ENCODE measurements at regions of chr15 and their contacts with region 1.

Region 1: GRCh38 chr15:91224755-91225380 is 124.8 kb downstream of the SV2B start:
- DNase-seq: no peak
- ATAC-seq: peak in 3 of 4 donors; percentile 31 to 68 (median 52)
- H3K4me3 ChIP-seq: no peak overlapping the region
- H3K27ac ChIP-seq: no peak overlapping the region
- H3K4me1 ChIP-seq: no peaks in the 10 kb centered on the region
- H3K27me3 ChIP-seq: peaks cover 0 to 3% (median 0%) of the 10 kb centered on the region in 3 donors
- CTCF ChIP-seq: peak; percentile 67

Region 2: DNA sequence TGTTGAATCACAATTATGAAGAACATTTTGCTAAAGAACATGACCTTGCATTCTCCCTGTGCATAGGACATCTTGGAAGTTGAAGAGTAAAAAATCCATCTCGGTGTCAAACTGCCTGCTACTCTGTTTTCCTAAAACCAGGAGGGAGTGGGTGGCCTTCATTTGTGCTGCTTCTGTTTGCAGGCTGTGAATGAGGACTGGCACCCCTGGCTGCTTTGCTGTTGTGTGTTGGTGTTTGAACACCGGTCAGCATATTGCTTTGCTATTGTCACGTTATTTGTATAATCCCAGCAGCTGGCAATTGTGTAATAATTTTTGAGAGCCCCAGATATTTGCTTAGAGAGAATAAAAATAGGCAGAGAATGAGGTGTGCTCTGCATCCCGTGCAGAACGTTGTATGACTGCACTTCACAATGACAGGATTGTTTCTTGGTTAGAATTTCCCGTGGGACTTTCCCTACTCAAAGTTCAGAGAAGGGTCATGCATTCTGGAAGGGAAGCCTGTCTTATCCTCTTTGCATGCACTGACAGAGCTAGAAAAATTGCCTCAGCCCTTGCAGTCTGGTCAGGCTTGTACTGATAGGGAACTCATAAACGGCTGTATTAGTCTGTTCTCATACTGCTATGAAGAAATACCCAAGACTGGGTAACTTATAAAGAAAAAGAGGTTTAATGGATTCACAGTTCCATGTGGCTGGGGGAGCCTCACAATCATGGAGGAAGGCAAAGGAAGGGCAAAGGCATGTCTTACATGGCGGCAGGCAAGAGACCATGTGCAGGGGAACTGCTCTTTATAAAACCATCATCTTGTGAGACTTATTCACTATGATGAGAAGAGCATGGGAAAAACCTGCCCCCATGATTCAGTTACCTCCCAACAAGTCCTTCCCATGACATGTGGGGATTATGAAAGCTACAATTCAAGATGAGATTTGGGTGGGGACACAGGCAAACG is 108.5 kb before region 1 on chr15:
- intact Hi-C with region 1: loop called in 1 of 2 experiments (anchors 5 kb)
- DNase-seq: no peak
- ATAC-seq: peak in 2 of 4 donors; percentile 30 to 32
- H3K4me3 ChIP-seq: no peak overlapping the region
- H3K27ac ChIP-seq: peak overlapping the region; percentile 30
- H3K4me1 ChIP-seq: peaks cover 12% of the 10 kb centered on the region
- H3K27me3 ChIP-seq: peaks cover 0 to 6% (median 2%) of the 10 kb centered on the region in 3 donors
- CTCF ChIP-seq: no peak

Region 3: DNA sequence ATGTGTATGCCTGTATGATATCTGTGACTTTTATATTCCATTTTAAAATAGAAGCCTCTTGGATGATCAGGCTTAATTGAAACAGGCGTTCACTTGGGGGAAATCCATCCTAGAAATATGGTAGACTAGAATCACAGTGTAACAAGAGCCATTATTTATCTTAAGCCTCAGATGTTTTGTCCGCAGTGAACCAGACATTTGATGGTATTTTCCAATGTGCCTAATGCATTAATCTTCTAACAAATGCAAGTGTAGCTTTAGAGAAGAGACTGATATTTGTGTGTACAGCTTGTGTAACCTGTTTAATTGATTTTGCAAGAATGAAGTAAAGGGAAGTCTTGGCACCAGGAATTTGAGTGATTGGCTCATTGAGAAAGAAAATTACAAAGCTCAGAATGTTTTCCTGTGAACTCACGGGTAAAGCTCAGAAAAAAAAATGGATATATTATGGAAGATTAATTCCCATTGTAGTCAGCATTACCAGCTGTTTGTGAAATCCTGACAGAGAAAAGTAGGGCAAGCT is 30.9 kb after region 1 on chr15:
- intact Hi-C with region 1: loop called in 1 of 2 experiments (anchors 1 kb)
- DNase-seq: no peak
- ATAC-seq: no peak
- H3K4me3 ChIP-seq: no peak overlapping the region
- H3K27ac ChIP-seq: no peak overlapping the region
- H3K4me1 ChIP-seq: no peaks in the 10 kb centered on the region
- H3K27me3 ChIP-seq: peaks cover 0 to 8% (median 0%) of the 10 kb centered on the region in 3 donors
- CTCF ChIP-seq: no peak